Activated B cell treated with CpG ODN at 0.5 μM for 24 hours (primary cell): ENCODE measurements at regions of chr16 and their contacts with region 1.

Region 1: GRCh38 chr16:27426423-27427408 is 24.7 kb downstream of the IL21R start:
- DNase-seq: peak; percentile 62
- ATAC-seq: peak; percentile 79
- H3K4me3 Mint-ChIP-seq: peak overlapping the region; percentile 65
- H3K27ac Mint-ChIP-seq: peak overlapping the region; percentile 88
- H3K4me1 Mint-ChIP-seq: peaks cover 83% of the 10 kb centered on the region
- H3K27me3 Mint-ChIP-seq: no peaks in the 10 kb centered on the region
- CTCF ChIP-seq: no peak

Region 2: GRCh38 chr16:27109666-27110523 is 316.8 kb before region 1 on chr16:
- CTCF ChIA-PET with region 1: no interaction called
- POLR2A ChIA-PET with region 1: no interaction called
- intact Hi-C with region 1: no loop called
- DNase-seq: peak; percentile 87
- ATAC-seq: peak; percentile 70
- H3K4me3 Mint-ChIP-seq: peak overlapping the region; percentile 70
- H3K27ac Mint-ChIP-seq: no peak overlapping the region
- H3K4me1 Mint-ChIP-seq: peaks cover 42% of the 10 kb centered on the region
- H3K27me3 Mint-ChIP-seq: no peaks in the 10 kb centered on the region
- CTCF ChIP-seq: peak; percentile 47

Region 3: DNA sequence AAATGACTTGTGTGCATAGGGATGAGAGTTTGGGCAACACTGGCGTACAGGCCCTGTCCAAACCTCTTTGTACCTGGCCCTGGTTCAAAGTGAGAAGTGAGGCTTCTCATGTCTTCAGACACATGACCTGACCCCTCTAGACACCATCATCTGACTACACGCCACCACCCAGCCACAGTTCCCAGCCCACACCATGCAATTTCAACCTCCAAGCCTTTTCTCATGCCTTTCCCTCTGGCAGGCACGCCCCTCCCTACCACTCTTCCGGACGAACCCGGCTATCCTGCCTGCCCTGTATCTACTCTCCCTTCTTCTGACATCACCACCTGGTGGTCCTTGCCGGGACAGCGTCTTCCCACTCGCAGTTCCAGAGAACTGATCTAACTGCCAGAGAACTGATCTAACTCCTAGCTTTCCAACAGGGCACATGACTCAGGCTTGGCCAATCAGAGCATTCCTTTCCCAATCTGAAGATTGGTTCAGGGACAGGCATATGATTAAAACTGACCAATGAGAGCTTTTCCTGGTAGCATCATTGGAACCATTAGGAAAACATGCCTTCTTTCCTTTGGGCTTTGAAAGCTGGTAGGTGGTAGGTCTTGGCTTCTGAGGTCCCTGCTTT is 51.8 kb before region 1 on chr16:
- CTCF ChIA-PET with region 1: no interaction called
- POLR2A ChIA-PET with region 1: interaction called, 37 read pairs
- intact Hi-C with region 1: loop called (anchors 2 kb)
- DNase-seq: no peak
- ATAC-seq: peak; percentile 35
- H3K4me3 Mint-ChIP-seq: no peak overlapping the region
- H3K27ac Mint-ChIP-seq: no peak overlapping the region
- H3K4me1 Mint-ChIP-seq: peaks cover 48% of the 10 kb centered on the region
- H3K27me3 Mint-ChIP-seq: no peaks in the 10 kb centered on the region
- CTCF ChIP-seq: no peak

Region 4: GRCh38 chr16:27401768-27402568 is 24.7 kb before region 1 on chr16 and contains the start of gene IL21R:
- CTCF ChIA-PET with region 1: interaction called, 8 read pairs
- POLR2A ChIA-PET with region 1: interaction called, 360 read pairs
- intact Hi-C with region 1: loop called (anchors 1 kb)
- DNase-seq: peak; percentile 76
- ATAC-seq: peak; percentile 53
- H3K4me3 Mint-ChIP-seq: peak within 1 kb of the TSS; percentile 99
- H3K27ac Mint-ChIP-seq: peak within 1 kb of the TSS; percentile 96
- H3K4me1 Mint-ChIP-seq: peaks cover 88% of the 10 kb centered on the region
- H3K27me3 Mint-ChIP-seq: no peaks in the 10 kb centered on the region
- CTCF ChIP-seq: no peak
- total RNA-seq, gene IL21R: 144 and 167 TPM in 2 replicates

Region 5: GRCh38 chr16:27408012-27408601 is 18.6 kb before region 1 on chr16:
- CTCF ChIA-PET with region 1: interaction called, 8 read pairs
- POLR2A ChIA-PET with region 1: interaction called, 360 read pairs
- intact Hi-C with region 1: loop called (anchors 1 kb)
- DNase-seq: no peak
- ATAC-seq: peak; percentile 35
- H3K4me3 Mint-ChIP-seq: peak overlapping the region; percentile 71
- H3K27ac Mint-ChIP-seq: peak overlapping the region; percentile 96
- H3K4me1 Mint-ChIP-seq: peaks cover 90% of the 10 kb centered on the region
- H3K27me3 Mint-ChIP-seq: no peaks in the 10 kb centered on the region
- CTCF ChIP-seq: no peak

Region 6: GRCh38 chr16:27436921-27437650 is 10.4 kb after region 1 on chr16:
- CTCF ChIA-PET with region 1: no interaction called
- POLR2A ChIA-PET with region 1: interaction called, 12 read pairs
- intact Hi-C with region 1: no loop called
- DNase-seq: peak; percentile 12
- ATAC-seq: no peak
- H3K4me3 Mint-ChIP-seq: no peak overlapping the region
- H3K27ac Mint-ChIP-seq: no peak overlapping the region
- H3K4me1 Mint-ChIP-seq: peaks cover 22% of the 10 kb centered on the region
- H3K27me3 Mint-ChIP-seq: no peaks in the 10 kb centered on the region
- CTCF ChIP-seq: no peak